GM13976 (cell line): ENCODE measurements at regions of chr7 and their contacts with region 1.

Region 1: GRCh38 chr7:90262438-90262837 is 17.5 kb downstream of the CFAP69 start:
- DNase-seq: peak; percentile 43
- CTCF ChIP-seq: peak; percentile 5

Region 2: DNA sequence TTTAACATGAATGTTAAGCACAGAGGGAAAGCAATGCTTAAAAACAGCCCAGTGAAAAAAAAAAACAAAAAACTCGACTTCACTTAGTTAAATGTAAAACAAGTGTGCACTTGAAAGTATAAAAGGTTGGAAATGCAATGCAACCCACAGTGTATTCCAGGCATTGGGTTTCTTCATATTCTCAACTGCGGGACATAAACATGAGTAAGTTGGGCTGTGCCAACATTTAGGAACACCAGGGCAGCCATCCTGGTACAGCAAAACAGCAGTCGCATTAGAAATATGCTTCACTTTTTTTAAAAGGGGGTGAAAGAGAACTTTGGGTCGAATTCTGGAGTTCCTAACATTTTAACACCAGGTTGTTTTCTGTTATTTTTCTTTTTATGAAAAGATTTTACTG is 107.2 kb before region 1 on chr7:
- in situ Hi-C with region 1: loop called (anchors 10 kb)
- DNase-seq: no peak
- CTCF ChIP-seq: no peak

Region 3: DNA sequence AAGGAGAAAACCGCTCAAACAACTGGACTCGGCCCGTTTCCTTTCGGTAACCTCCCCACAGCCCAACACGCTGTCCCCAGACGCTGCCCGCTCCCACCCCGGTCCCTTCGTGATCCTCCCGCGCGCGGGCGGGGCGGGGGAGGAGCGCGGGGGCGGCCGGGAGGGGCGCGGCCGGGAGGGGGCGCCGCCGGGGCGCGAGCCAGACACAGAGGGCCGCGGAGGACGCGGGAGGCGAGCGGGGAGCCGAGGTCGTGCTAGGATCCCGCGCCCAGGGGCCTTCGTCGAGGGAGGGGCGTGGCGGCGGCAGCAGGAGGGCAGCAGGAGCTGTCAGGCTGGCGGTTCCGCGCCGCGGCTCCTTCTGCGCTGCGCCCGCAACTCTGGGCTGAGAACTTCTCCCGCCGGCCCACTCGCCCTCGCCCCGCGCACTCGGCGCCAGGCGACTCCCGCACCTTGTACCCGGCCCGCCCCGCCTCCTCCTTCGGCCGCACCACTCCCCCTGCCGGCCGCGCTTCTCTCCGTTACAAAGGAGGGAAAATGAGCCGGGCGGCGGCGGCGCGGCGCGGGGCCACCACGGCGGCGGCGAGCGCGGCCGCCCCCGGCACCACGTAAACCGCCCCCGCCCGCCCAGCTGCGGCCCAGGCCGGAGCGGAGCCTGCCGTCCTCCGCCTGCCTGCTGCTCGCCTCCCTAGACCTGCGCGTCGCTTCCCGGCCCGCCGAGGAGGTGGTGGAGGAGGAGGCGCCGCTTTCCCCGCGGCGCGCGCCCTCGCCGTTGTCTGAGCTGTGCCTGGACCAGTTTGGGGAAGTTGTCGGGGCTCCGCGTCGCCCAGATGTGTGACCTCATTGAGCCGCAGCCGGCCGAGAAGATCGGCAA is 333.6 kb after region 1 on chr7 and contains the start of gene CDK14:
- in situ Hi-C with region 1: no loop called
- DNase-seq: peak; percentile 82
- CTCF ChIP-seq: peak; percentile 40